Activated CD4-positive, alpha-beta memory T cell treated with anti-CD3 and anti-CD28 coated beads, Interleukin-2, amount 10 ng/mL, durations not matched to agents 7 days and 5 days (primary cell): ENCODE measurements at regions of chr18 and their contacts with region 1.

Region 1: GRCh38 chr18:712401-713134 is at the start of gene ENOSF1:
- DNase-seq: peak; percentile 90
- H3K4me3 Mint-ChIP-seq: peak within 1 kb of the TSS; percentile 86
- H3K27ac Mint-ChIP-seq: peak within 1 kb of the TSS; percentile 90
- H3K4me1 Mint-ChIP-seq: peaks cover 61% of the 10 kb centered on the region
- H3K27me3 Mint-ChIP-seq: no peaks in the 10 kb centered on the region
- total RNA-seq, gene ENOSF1: 65.3 to 67.1 TPM

Region 2: GRCh38 chr18:812376-813171 is 100.0 kb after region 1 on chr18:
- CTCF ChIA-PET with region 1: interaction called, 12 read pairs
- POLR2A ChIA-PET with region 1: interaction called, 30 read pairs
- DNase-seq: peak; percentile 83
- H3K4me3 Mint-ChIP-seq: peak overlapping the region; percentile 83
- H3K27ac Mint-ChIP-seq: peak overlapping the region; percentile 99
- H3K4me1 Mint-ChIP-seq: peaks cover 72% of the 10 kb centered on the region
- H3K27me3 Mint-ChIP-seq: peaks cover 3% of the 10 kb centered on the region